Activated CD4-positive, alpha-beta T cell treated with anti-CD3 and anti-CD28 coated beads, Interleukin-2, amount 10 ng/mL, durations not matched to agents 7 days and 5 days (primary cell): ENCODE measurements at regions of chr1 and their contacts with region 1.

Region 1: DNA sequence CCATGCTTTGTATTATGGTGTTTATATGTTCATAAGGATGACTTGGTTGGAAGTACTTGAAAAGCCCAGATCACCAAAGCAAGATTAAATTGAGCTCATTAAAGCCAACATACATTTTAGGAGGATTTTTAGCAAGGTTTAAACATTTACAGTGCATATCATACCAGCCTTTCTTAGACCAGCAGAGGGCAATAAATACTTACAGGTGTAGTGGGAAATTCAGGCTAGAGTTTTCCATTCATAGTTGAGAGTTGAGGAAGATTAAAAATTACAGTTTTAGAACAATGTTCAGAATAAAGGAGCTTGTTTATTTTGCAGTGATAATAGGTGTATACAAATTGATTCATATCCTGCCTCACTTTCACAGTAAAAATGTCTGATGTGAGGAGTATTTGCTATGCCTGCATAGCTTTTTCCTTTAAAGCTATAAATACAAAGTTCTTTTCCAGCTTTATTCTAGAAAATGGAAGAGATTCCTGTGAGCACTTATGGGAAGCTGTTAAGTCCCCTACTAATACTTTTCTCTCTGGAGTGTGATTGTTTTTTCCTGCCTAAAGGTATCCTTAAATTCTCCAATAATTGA is 35.3 kb downstream of the DTL start:
- DNase-seq: no peak
- H3K4me3 Mint-ChIP-seq: no peak overlapping the region
- H3K27ac Mint-ChIP-seq: no peak overlapping the region
- H3K4me1 Mint-ChIP-seq: no peaks in the 10 kb centered on the region
- H3K27me3 Mint-ChIP-seq: no peaks in the 10 kb centered on the region

Region 2: GRCh38 chr1:212368073-212368484 is 297.3 kb after region 1 on chr1:
- CTCF ChIA-PET with region 1: interaction called, 16 read pairs
- POLR2A ChIA-PET with region 1: no interaction called
- DNase-seq: peak; percentile 78
- H3K4me3 Mint-ChIP-seq: no peak overlapping the region
- H3K27ac Mint-ChIP-seq: no peak overlapping the region
- H3K4me1 Mint-ChIP-seq: peaks cover 3% of the 10 kb centered on the region
- H3K27me3 Mint-ChIP-seq: no peaks in the 10 kb centered on the region